ENCODE measurements at regions of chr14 and their contacts with region 1.

Region 1: GRCh38 chr14:54691525-54692283 is 124.8 kb downstream of the SAMD4A start:
- DNase-seq: peak; percentile 54 to 67 (median 66)
- H3K4me3 ChIP-seq: no peak overlapping the region
- H3K27ac ChIP-seq: no peak overlapping the region
- H3K4me1 ChIP-seq: peaks cover 0 to 12% (median 5%) of the 10 kb centered on the region in 4 experiments
- H3K27me3 ChIP-seq: no peaks in the 10 kb centered on the region

Region 2: DNA sequence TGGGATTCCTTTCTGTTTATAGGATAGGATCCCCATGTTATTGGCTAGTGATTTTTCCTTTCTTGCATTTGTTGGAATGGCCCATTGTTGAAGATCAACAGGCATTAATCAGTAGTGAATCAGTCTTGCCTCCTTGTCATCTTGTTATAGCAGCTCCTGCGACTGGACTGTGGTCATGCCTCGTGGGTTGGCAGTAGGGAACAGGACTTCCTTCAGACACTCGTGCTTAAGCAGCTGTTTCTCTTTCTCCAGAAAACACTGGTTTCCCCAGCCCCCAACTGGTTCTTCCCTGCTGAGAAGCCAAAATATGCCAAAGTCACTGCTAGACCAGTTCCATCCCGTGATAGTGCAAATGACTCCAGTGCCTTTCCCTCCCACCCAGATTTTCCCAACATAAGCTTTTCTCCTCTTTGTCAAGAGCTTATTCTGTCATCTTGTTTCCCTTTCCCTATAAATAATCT is 41.3 kb before region 1 on chr14:
- CTCF ChIA-PET with region 1: interaction called, 11 read pairs
- POLR2A ChIA-PET with region 1: no interaction called
- DNase-seq: peak in 2 of 3 donors; percentile 62 to 75
- H3K4me3 ChIP-seq: peak overlapping the region in 1 of 7 experiments; percentile 23
- H3K27ac ChIP-seq: no peak overlapping the region
- H3K4me1 ChIP-seq: peaks cover 0 to 33% (median 21%) of the 10 kb centered on the region in 4 experiments
- H3K27me3 ChIP-seq: no peaks in the 10 kb centered on the region